Activated naive CD4-positive, alpha-beta T cell treated with anti-CD3 and anti-CD28 coated beads for 36 hours (primary cell): ENCODE measurements at regions of chr5 and their contacts with region 1.

Region 1: GRCh38 chr5:56270568-56271392 is 37.6 kb upstream of the ANKRD55 start:
- DNase-seq: peak; percentile 88
- H3K4me3 Mint-ChIP-seq: peak overlapping the region; percentile 17
- H3K27ac Mint-ChIP-seq: peak overlapping the region; percentile 61
- H3K4me1 Mint-ChIP-seq: peaks cover 17% of the 10 kb centered on the region
- H3K27me3 Mint-ChIP-seq: no peaks in the 10 kb centered on the region

Region 2: DNA sequence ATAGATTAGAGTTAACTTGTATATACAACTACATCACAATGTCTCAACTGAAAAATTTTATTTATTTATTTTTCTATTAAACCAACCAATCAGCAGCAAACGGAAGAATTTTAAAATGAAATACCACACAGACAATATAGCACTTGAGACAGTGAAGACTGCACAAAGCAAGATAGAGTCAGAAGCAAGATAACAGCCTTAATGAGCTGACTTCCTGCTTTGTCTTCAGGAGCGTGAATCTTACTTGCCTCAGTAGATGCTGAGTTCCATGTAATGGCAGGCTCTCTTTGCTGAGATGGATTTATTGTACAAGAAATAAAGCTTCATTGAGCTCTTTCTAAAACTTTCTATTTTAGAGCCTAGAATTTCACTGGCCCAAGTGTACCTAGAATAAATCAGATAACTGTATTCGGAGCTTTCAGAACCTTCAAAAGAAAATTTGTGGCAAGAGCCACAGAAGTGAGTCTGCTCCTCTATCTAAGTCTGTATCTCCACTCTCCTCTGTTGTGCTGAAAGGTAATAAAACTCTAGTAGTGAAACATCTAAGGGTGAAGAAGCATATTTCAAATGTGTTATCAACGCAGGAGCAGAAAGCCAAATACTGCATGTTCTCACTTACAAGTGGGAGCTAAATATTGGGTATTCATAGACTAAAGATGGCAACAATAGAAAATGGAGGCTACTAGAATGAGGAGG is 45.7 kb after region 1 on chr5:
- CTCF ChIA-PET with region 1: interaction called, 10 read pairs
- intact Hi-C with region 1: no loop called
- DNase-seq: no peak
- H3K4me3 Mint-ChIP-seq: no peak overlapping the region
- H3K27ac Mint-ChIP-seq: no peak overlapping the region
- H3K4me1 Mint-ChIP-seq: peaks cover 38% of the 10 kb centered on the region
- H3K27me3 Mint-ChIP-seq: no peaks in the 10 kb centered on the region

Region 3: DNA sequence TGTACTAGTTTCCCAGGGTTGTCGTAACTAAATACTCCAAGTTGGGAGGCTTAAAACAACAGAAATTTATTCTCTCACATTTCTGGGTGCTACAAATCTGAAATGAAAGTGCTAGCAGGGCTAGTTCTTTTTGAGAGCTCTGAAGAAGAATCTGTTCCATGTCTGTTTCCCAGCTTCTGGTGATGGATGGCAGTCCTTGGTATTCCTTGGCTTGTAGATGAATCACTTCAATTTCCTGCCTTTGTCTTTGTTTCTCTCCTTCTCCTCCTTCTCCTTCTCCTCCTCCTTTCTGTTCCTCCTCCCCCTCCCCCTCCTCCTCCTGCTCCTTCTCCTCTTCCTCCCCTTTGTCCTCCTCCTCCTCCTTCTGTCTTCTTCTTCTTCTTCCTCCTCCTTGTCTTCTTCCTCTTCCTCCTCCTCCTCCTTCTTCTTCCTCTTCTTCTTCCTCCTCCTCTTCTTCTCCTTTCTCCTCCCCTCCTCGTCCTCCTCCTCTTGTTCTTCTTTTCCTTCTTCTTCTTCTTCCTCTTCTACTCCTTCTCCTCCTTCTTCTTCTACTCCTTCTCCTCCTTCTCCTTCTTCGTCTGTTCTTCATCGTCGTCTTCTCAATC is 67.0 kb after region 1 on chr5:
- CTCF ChIA-PET with region 1: no interaction called
- intact Hi-C with region 1: no loop called
- DNase-seq: no peak
- H3K4me3 Mint-ChIP-seq: no peak overlapping the region
- H3K27ac Mint-ChIP-seq: no peak overlapping the region
- H3K4me1 Mint-ChIP-seq: peaks cover 9% of the 10 kb centered on the region
- H3K27me3 Mint-ChIP-seq: no peaks in the 10 kb centered on the region

Region 4: DNA sequence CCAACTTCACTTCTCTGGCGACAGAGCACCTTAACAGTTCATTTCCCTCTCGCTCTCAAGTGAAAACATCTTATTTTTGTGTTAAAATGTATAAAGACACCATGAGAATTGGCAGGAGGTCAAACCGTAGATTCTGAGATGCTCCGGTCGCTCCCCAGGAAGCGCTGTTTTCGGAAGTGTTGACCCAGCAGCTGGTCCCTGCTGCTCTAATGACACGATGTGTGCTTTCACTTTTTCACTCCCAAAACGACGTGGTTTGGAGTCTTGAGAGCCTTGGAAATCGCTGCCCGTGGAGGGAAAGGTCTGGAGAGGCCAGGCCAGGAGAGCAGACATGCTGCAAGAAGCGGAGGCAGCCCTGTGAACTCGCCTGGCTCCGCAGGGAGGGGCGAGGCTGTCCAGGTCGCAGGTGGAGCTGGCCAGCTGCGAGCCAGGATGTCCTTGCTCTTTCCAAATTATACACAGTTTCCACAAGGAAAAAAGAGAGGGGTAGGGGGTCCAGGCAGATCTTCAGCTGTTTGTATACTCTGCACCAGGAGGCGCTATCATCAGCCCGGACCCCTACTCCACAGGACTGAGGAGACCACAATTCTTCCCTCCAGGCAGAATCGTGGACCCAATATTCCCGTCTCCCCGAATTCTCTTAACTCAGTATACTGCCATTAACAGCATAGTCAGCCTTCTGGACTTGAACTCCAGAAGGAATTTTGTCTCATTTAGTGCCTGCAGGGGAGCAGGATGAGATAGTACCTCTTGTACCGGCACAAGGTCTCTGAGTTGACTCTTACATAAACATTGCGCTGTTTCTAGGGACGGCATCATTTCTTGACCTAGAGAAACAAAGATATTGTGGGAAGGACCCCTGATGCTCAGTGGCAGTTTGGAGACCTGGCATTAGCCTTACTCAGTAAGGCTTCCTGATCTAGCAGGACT is 210.9 kb after region 1 on chr5:
- CTCF ChIA-PET with region 1: interaction called, 18 read pairs
- intact Hi-C with region 1: loop called (anchors 2 kb)
- DNase-seq: peak; percentile 14
- H3K4me3 Mint-ChIP-seq: peak overlapping the region; percentile 73
- H3K27ac Mint-ChIP-seq: no peak overlapping the region
- H3K4me1 Mint-ChIP-seq: peaks cover 30% of the 10 kb centered on the region
- H3K27me3 Mint-ChIP-seq: no peaks in the 10 kb centered on the region

Region 5: GRCh38 chr5:56814963-56815658 is 544.3 kb after region 1 on chr5 and contains the start of gene MAP3K1:
- CTCF ChIA-PET with region 1: interaction called, 4 read pairs
- intact Hi-C with region 1: loop called (anchors 1 kb)
- DNase-seq: peak; percentile 74
- H3K4me3 Mint-ChIP-seq: peak within 1 kb of the TSS; percentile 88
- H3K27ac Mint-ChIP-seq: peak within 1 kb of the TSS; percentile 87
- H3K4me1 Mint-ChIP-seq: peaks cover 34% of the 10 kb centered on the region
- H3K27me3 Mint-ChIP-seq: no peaks in the 10 kb centered on the region
- total RNA-seq, gene MAP3K1: 18.2 to 19.2 TPM

Region 6: DNA sequence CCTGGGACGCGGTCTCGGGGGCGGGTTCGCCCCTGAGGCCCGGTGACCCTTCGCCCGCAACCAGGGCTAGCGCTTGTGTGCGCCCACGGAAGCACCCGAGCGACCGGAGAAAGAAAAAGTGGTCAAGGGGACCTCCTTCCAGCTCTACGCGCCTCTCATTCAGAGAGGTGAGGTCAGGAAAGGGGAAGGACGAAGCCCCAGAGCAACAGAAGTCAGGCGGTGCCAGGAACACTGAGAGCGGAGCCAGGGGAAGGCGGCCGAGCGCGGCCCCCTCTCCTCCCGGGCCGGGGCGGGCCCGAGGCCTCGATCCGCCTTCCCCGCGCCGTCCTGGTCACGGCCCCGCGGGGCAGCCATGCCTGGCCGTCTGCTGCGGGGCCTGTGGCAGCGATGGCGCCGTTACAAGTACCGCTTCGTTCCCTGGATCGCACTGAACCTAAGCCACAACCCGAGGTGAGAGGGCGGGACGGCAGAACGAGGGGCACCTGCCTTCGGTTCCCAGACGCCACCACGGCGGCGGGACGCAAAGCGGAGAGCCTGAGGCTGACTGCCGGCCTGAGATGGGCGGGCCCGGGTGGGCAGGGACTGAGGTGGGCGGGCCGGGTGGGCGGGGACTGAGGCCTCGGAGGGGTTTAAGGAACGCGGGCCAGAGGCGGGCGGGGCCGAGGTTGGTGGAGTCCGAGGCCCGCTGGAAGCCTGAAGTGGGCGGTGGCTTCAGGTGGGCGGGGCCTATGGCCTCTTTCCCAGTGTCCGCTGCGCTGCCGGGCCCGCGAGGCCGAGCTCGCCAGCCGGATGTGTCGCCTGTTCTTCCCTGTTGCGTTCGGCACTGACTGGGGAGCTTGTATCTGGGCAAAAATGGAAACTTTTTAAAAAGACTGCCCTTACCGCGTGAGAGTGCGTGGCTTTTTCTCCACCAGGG is 638.8 kb after region 1 on chr5 and contains the start of gene SETD9:
- CTCF ChIA-PET with region 1: no interaction called
- intact Hi-C with region 1: loop called (anchors 1 kb)
- DNase-seq: peak; percentile 97
- H3K4me3 Mint-ChIP-seq: peak within 1 kb of the TSS; percentile 81
- H3K27ac Mint-ChIP-seq: peak within 1 kb of the TSS; percentile 94
- H3K4me1 Mint-ChIP-seq: peaks cover 19% of the 10 kb centered on the region
- H3K27me3 Mint-ChIP-seq: no peaks in the 10 kb centered on the region
- total RNA-seq, gene SETD9: 5.8 to 8.6 TPM

Region 7: DNA sequence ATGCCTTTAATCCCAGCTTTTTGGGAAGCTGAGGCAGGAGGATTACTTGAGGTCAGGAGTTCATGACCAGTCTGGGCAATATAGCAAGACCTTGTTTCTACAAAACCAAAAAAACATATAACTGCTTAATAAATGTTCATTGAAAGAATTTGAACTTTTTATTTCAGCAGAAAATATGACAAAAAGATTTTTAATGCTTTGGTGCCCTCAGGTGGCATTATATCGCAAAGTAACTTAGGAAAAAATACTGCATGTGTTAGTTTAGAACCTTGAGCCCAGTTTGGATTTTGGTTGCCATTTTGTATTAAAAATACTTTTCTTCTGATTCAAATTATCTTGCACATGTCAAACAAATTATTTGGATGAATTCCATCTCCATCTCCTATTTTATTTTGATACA is 1006.3 kb after region 1 on chr5:
- CTCF ChIA-PET with region 1: no interaction called
- intact Hi-C with region 1: loop called (anchors 2 kb)
- DNase-seq: no peak
- H3K4me3 Mint-ChIP-seq: no peak overlapping the region
- H3K27ac Mint-ChIP-seq: no peak overlapping the region
- H3K4me1 Mint-ChIP-seq: no peaks in the 10 kb centered on the region
- H3K27me3 Mint-ChIP-seq: peaks cover 6% of the 10 kb centered on the region